ENCODE measurements at regions of chr10 and their contacts with region 1.

Region 1: DNA sequence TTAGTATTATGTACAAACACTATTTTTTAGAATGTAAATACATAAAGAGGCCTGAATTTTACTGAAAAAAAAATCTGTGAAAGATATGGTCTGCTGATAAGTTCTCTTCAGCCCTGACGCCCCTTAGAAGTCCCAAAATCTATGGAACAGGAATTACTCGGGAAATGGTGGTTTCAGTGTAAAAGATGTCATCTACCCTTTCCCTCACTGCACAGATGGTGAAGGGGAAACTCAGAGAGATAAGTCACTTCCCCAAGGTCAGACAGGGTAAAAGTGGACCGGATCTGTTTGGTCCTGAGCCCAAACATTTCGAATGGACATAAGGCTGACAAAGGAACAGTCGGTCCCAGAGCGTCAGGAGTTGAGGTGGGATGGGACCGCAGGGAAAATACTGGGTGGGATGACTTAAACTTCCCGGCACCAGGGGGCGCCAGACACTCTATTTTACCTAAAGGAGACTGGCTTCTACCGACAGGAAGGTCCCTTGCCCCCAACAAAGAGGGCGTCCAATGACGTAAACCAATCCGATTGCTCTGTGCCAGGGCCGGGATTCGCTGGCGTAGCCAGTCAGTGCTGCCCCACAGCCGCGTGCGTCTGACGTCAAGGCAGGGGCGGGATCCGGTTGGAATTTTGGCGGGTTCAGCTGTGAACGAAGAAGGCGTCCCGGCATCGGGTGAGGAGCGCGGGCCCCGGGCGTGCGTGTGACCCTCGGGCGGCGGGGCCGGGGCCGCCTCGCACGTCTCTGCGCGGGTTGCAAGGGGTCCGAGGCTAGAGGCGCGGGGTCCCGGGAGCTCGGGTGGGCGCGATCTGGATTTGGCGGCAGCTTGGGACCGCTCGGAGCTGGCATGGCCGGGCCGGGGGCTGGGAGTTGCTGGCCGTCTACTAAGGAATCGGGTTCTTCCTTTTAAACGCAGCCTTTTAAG is at the start of gene MCM10:
- DNase-seq: peak; percentile 99
- ATAC-seq: peak; percentile 99
- H3K4me3 Mint-ChIP-seq: peak within 1 kb of the TSS; percentile 88
- H3K27ac Mint-ChIP-seq: peak within 1 kb of the TSS; percentile 84
- H3K4me1 Mint-ChIP-seq: peaks cover 47% of the 10 kb centered on the region
- H3K27me3 Mint-ChIP-seq: peaks cover 2% of the 10 kb centered on the region
- total RNA-seq, gene MCM10: 75.1 to 78.2 TPM

Region 2: GRCh38 chr10:13099666-13100348 is 61.4 kb before region 1 on chr10 and contains the start of gene OPTN:
- CTCF ChIA-PET with region 1: interaction called, 14 read pairs
- DNase-seq: peak; percentile 87
- ATAC-seq: peak; percentile 80
- H3K4me3 Mint-ChIP-seq: peak within 1 kb of the TSS; percentile 92
- H3K27ac Mint-ChIP-seq: peak within 1 kb of the TSS; percentile 89
- H3K4me1 Mint-ChIP-seq: peaks cover 41% of the 10 kb centered on the region
- H3K27me3 Mint-ChIP-seq: no peaks in the 10 kb centered on the region
- total RNA-seq, gene OPTN: 111 to 112 TPM

Region 3: DNA sequence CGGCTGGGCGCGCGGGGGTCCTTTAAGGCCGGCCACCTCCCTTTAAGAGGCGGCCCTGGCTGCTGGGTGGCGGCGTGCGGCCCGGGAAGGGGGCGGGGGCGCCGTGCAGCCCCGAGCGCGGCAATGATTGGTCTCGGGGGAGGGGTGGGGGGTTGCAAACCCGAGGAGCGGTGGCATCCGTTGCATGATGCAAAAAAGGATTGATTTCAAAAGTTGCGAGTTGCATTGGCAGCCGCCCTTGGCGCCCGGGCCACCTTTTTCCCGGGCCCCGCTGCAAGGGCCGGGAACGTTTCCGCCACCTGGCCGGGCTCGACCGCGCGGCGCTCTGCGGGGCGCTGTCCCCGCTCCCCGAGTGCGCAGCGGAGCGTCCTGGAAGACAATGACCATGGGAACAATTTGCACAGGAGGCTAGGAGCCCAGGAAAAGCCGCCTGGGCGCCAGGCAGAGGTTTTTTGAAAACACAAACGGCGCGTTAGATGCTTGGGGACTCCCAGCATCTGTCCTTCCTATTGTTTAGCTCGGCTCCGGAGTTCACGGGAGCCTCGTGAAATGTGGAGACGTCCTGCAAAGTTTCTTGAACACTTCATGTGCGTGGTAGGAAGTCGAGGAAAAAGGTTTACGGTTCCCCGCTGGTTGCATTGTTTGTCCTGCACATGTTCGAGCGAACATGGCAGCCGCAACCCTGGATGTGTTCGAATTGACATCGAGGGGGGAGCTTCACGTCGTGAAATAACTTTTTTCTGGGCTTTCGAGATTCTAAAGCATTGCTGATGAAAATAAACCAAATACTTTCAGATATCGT is 187.2 kb after region 1 on chr10 and contains the start of gene SEPHS1:
- CTCF ChIA-PET with region 1: interaction called, 20 read pairs
- DNase-seq: peak; percentile 86
- ATAC-seq: peak; percentile 80
- H3K4me3 Mint-ChIP-seq: peak within 1 kb of the TSS; percentile 85
- H3K27ac Mint-ChIP-seq: peak within 1 kb of the TSS; percentile 93
- H3K4me1 Mint-ChIP-seq: peaks cover 58% of the 10 kb centered on the region
- H3K27me3 Mint-ChIP-seq: peaks cover 2% of the 10 kb centered on the region
- total RNA-seq, gene SEPHS1: 48.9 to 55.2 TPM

Region 4: GRCh38 chr10:13382703-13383398 is 221.7 kb after region 1 on chr10:
- CTCF ChIA-PET with region 1: no interaction called
- DNase-seq: no peak
- ATAC-seq: no peak
- H3K4me3 Mint-ChIP-seq: no peak overlapping the region
- H3K27ac Mint-ChIP-seq: no peak overlapping the region
- H3K4me1 Mint-ChIP-seq: peaks cover 9% of the 10 kb centered on the region
- H3K27me3 Mint-ChIP-seq: peaks cover 46% of the 10 kb centered on the region

Measured in activated CD8-positive, alpha-beta memory T cell treated with anti-CD3 and anti-CD28 coated beads, Interleukin-2, amount 10 ng/mL, durations not matched to agents 7 days and 5 days (primary cell).